Activated CD4-positive, alpha-beta memory T cell treated with anti-CD3 and anti-CD28 coated beads for 36 hours (primary cell): ENCODE measurements at regions of chr9 and their contacts with region 1.

Region 1: DNA sequence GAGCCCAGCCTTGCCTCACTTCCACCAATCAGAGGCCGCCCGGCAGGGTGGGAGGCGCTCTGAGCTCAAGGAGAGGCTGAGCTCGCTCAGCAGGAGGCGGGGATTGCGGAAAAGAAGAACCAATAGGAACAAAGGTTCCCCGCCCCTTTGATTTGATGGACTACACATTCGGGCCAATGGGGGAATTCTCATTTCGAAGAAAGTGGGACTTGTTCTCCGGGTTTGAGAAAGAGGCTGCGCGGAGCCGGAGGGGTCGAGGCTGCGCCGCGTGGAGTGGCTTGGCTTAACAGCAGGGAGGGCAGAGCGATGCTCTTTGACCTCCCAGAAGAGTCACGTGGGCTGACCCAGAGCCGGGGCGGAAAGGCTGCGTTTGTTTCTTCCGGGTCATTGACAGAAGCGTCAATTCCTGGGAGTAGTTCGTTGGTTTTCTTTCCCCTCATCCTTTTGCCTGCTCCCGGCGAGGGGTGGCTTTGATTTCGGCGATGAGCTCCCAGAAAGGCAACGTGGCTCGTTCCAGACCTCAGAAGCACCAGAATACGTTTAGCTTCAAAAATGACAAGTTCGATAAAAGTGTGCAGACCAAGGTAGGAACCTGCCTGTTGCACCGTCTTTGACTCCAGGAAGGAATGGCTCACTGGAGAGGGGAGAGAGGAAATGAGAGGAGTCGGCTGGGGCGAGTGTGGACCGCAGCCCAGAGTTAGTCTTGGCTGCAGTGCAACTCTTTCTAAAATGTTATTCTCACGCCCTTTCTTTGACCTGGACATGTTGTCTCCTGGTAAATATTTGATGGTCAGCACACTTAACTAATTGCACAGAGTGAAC is at the start of gene C9orf85:
- DNase-seq: peak; percentile 98
- H3K4me3 Mint-ChIP-seq: peak within 1 kb of the TSS; percentile 97
- H3K27ac Mint-ChIP-seq: peak within 1 kb of the TSS; percentile 92
- H3K4me1 Mint-ChIP-seq: peaks cover 52% of the 10 kb centered on the region
- H3K27me3 Mint-ChIP-seq: no peaks in the 10 kb centered on the region
- total RNA-seq, gene C9orf85: 7.3 to 7.5 TPM

Region 2: DNA sequence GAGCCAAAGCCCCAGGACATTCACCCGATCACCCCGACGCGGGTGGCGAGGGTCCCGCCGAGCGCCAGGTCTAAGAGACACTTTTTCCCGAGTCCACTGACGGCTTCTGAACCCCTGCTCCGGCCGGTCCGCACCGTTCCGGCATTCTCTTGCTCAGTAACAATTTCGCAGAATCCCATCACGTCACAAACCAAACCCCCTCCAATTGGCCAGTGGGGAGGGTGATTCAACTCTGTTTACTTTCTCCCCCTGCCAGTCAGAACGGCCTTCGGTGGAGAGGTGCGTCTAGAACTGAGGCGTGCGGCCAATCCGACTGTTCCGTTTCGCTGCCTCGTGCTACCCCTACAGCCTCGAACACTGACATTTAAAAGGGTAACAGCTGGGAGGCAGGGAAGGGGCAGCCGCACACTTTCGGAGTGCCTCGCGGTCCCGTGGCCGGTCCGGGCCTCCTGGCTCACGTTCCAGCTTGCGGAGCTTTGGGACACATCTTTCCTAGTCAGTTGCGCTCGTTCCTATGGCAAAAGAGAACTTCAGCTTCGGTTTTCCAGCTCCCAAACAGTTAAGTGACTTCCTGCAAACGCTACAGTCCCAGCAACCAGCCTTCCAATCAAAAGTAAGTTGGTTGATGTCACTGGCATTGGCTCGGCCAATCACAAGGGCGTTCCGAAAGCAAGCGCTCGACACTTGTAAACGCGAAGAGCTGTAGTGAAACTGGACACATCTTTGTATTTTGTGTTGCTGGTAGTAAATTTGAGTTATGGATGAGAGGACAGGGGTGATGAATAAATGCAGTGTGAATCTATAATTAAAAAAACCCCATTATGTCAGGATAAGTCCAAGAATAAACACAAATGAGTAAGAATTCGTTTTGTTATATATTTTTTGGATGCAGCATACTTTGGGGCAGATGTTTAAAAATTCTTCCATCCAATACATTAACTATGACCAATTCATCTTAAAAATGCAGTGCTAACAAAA is 1497.4 kb before region 1 on chr9 and contains the start of gene KLF9:
- CTCF ChIA-PET with region 1: no interaction called
- POLR2A ChIA-PET with region 1: no interaction called
- intact Hi-C with region 1: loop called (anchors 2 kb)
- DNase-seq: peak; percentile 96
- H3K4me3 Mint-ChIP-seq: peak within 1 kb of the TSS; percentile 97
- H3K27ac Mint-ChIP-seq: peak within 1 kb of the TSS; percentile 100
- H3K4me1 Mint-ChIP-seq: peaks cover 37% of the 10 kb centered on the region
- H3K27me3 Mint-ChIP-seq: peaks cover 2% of the 10 kb centered on the region
- total RNA-seq, gene KLF9: 23.7 to 24.5 TPM

Region 3: DNA sequence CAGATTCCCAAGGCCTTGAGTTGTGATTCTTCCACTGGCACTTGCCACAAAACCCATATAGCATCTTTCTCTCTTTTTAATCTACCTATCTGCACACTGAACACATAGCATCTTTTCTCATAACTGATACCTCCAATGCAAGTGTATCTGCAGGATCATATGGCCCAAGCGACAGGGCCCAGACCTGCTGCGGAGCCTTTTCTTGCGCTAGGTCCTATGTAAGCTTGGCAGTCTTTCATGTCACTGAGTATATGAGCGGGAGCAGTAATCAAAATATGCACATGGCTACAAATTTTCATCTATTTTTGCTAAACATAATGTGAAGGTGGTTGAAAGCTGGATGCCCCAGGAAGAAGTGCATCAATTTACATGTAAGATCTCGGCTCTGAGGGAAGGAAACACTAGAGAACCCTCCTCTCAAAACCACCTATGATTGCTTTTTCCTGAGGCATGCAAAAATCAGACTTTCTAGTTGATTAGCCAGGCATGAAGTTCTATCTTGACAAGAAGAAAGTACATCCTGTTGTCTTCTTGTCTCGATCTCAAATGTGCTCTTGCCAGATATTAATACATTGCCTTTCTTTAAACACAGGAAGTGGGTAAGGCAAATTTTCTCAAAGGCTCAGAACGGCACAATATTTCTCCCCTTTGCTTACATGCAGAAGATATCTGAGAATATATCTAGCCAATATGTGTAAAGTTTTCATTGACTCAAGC is 116.2 kb before region 1 on chr9:
- CTCF ChIA-PET with region 1: no interaction called
- POLR2A ChIA-PET with region 1: no interaction called
- intact Hi-C with region 1: loop called (anchors 5 kb)
- DNase-seq: no peak
- H3K4me3 Mint-ChIP-seq: peak overlapping the region; percentile 9
- H3K27ac Mint-ChIP-seq: peak overlapping the region; percentile 83
- H3K4me1 Mint-ChIP-seq: peaks cover 54% of the 10 kb centered on the region
- H3K27me3 Mint-ChIP-seq: no peaks in the 10 kb centered on the region

Region 4: DNA sequence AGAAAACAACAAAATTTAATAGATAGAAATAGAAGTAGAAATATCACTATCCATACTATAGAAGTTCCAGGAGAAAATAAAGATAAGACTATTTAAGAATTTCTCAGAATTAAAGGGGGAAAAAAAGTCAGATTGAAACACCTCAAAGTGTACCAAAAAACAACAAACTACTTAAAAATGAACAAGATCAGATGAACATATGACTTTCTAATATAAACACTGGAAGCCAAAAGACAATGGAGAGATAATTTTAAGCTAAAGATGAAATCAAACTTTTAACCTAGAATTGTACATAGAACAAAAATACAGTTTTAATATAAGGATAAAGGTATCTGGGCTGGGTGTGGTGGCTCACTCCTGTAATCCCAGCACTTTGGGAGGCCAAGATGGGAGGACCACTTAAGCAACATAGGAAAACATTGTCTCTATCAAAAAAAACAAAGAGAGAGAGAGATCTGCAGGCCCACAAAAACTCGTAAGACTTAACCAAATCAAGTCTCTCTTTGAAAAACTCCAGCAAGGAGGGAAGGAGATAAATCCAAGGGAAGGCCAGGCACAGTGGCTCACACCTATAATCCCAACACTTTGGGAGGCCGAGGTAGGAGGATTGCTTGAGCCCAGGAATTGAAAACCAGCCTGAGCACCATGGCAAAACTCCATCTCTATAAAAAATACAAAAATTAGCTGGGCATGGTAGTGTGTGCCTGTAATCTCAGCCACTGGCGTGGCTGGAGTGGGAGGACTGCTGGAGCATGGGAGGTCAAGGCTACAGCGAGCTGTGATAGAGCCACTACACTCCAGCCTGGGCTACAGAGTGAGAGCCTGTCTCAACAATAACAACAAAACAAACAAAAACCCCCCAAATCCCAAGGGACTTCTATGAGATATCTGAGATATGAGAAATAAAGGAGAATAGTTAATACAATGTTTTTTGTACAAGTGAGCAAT is 32.9 kb before region 1 on chr9:
- CTCF ChIA-PET with region 1: no interaction called
- POLR2A ChIA-PET with region 1: no interaction called
- intact Hi-C with region 1: loop called (anchors 5 kb)
- DNase-seq: no peak
- H3K4me3 Mint-ChIP-seq: no peak overlapping the region
- H3K27ac Mint-ChIP-seq: no peak overlapping the region
- H3K4me1 Mint-ChIP-seq: no peaks in the 10 kb centered on the region
- H3K27me3 Mint-ChIP-seq: no peaks in the 10 kb centered on the region

Region 5: GRCh38 chr9:72473474-72474261 is 562.2 kb after region 1 on chr9:
- CTCF ChIA-PET with region 1: no interaction called
- POLR2A ChIA-PET with region 1: no interaction called
- intact Hi-C with region 1: loop called (anchors 10 kb)
- DNase-seq: no peak
- H3K4me3 Mint-ChIP-seq: no peak overlapping the region
- H3K27ac Mint-ChIP-seq: peak overlapping the region; percentile 79
- H3K4me1 Mint-ChIP-seq: peaks cover 41% of the 10 kb centered on the region
- H3K27me3 Mint-ChIP-seq: no peaks in the 10 kb centered on the region